ENCODE measurements at regions of chr19 and their contacts with region 1.

Region 1: DNA sequence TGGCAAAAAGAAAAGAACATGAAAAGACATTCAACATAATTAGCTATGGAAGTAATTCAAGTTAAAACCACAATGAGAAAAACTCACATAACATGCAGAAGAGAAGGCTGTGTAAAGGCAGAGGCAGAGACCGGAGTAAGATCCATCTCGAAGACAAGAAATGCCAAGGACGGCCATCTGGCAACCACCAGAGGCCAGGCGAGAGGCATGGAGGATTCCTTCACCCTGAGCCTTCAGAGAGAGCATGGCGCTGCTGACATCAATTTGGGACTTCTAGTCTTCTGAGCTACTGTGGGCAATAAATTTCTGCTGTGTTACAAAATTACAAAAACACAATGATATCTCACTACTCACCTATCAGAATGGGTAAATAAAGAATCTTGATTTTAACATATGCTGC is 381.0 kb downstream of the TSHZ3 start:
- DNase-seq: peak in 1 of 2 experiments; percentile 35
- ATAC-seq: peak; percentile 77 to 82
- H3K4me3 ChIP-seq: no peak overlapping the region
- H3K27ac ChIP-seq: no peak overlapping the region
- H3K4me1 ChIP-seq: no peaks in the 10 kb centered on the region
- CTCF ChIP-seq: peak; percentile 37; the same call in 2 of the 3 replicates
- EP300 ChIP-seq: no peak
- POLR2A ChIP-seq: no peak
- RAD21 ChIP-seq: peak; percentile 37 to 45; a peak in 3 of 5 replicates

Region 2: DNA sequence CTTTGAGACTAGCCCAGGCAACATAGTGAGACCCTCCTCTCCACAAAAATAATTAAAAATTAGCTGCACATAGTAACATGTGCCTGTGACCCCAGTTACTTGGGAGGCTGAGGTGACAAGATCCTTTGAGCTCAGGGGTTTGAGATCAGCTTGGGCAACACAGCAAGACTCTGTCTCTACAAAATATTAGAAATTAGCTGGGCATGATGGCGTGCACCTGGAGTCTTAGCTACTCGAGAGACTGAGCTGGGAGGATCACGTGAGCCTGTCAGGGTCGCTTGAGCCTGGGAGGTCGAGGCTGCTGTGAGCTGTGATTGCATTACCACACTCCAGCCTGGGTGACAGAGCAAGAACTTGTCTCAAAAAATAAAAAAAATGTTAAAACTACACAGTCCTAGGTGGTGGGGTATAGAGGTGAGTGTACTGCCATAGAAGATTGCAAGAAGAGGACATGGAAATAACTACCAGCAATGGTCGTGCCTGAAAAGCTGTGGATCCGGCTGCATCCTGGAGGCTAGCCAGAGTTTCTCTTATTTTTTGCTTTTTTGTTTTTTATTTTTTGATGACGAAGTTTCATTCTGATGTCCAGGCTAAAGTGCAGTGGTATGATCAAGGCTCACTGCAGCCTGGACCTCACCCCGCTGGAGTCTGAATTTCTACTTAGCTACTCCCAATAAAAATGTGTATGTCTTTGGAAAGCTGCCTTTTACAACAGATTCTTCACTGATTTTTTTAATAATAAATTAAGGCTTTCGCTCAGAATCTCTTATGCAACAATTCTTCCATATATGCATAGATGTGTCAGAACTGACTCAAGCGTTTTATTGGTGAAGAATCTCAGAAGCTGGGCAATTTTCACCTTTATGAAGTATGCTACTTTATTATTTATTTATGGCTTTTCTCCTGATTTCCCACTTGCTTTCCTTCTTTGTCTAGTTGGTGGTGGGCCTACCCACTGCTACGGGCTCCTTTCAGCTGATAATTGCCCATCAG is 12.8 kb before region 1 on chr19:
- CTCF ChIA-PET with region 1: interaction called, 15 read pairs
- POLR2A ChIA-PET with region 1: no interaction called
- DNase-seq: no peak
- ATAC-seq: no peak
- H3K4me3 ChIP-seq: no peak overlapping the region
- H3K27ac ChIP-seq: no peak overlapping the region
- H3K4me1 ChIP-seq: no peaks in the 10 kb centered on the region
- CTCF ChIP-seq: no peak
- EP300 ChIP-seq: no peak
- POLR2A ChIP-seq: no peak
- RAD21 ChIP-seq: no peak

Measured in A549 (cell line).